Transverse colon (tissue), 4 donors: ENCODE measurements at regions of chr21 and their contacts with region 1.

Region 1: GRCh38 chr21:20949884-20950283 is 48.3 kb upstream of the NCAM2 start:
- DNase-seq: no peak
- H3K4me3 ChIP-seq: no peak overlapping the region
- H3K27ac ChIP-seq: no peak overlapping the region
- H3K4me1 ChIP-seq: no peaks in the 10 kb centered on the region
- H3K27me3 ChIP-seq: no peaks in the 10 kb centered on the region
- CTCF ChIP-seq: no peak
- EP300 ChIP-seq: no peak
- POLR2A ChIP-seq: no peak

Region 2: GRCh38 chr21:22244229-22244915 is 1294.5 kb after region 1 on chr21:
- in situ Hi-C with region 1: no loop called
- intact Hi-C with region 1: loop called (anchors 5 kb)
- DNase-seq: no peak
- H3K4me3 ChIP-seq: no peak overlapping the region
- H3K27ac ChIP-seq: no peak overlapping the region
- H3K4me1 ChIP-seq: no peaks in the 10 kb centered on the region
- H3K27me3 ChIP-seq: no peaks in the 10 kb centered on the region
- CTCF ChIP-seq: no peak
- EP300 ChIP-seq: no peak
- POLR2A ChIP-seq: no peak